OCI-LY7 (cell line): ENCODE measurements at regions of chr20 and their contacts with region 1.

Region 1: DNA sequence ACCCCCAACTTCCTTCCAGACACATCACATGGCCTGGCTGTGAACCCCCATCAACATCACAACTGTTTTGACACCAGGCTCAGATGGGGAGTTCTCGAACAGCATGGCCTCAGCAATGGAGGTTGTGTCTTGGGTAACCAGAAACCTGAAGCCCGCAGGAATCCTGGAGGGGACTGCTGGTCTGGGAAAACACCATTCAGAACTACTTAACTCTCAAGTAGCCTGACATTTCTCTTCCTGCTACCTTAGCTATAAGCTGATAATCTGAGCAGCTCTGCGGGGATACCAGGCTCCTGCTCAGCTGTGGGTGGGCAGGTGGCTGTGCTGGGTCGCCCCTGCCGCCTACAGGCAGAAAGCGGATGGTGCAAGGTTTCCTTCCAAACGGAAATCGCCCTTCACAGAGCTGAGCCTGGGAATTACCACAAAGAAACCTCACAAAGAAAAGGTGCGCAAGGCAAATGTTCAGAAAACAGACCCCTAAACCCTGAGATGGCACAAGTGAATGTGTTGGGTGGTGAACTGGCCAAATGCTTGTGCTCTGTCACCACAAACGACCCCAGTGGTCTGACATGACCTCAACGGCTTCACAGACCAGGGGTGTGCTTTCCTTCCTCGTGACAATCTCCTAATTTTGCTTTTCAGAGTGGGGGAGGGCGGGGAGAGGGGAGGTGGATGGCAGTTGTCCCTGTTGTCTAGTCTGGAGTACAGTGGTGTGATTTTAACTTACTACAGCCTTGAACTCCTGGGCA is 29.5 kb downstream of the SNX5 start:
- DNase-seq: peak; percentile 75
- H3K4me3 ChIP-seq: no peak overlapping the region
- H3K27ac ChIP-seq: peak overlapping the region; percentile 16
- H3K4me1 ChIP-seq: peaks cover 51% of the 10 kb centered on the region
- CTCF ChIP-seq: peak; percentile 86

Region 2: GRCh38 chr20:17504898-17505635 is 434.0 kb before region 1 on chr20:
- CTCF ChIA-PET with region 1: no interaction called
- POLR2A ChIA-PET with region 1: no interaction called
- intact Hi-C with region 1: loop called (anchors 1 kb)
- DNase-seq: peak; percentile 79
- H3K4me3 ChIP-seq: peak overlapping the region; percentile 60
- H3K27ac ChIP-seq: no peak overlapping the region
- H3K4me1 ChIP-seq: peaks cover 13% of the 10 kb centered on the region
- CTCF ChIP-seq: peak; percentile 90

Region 3: DNA sequence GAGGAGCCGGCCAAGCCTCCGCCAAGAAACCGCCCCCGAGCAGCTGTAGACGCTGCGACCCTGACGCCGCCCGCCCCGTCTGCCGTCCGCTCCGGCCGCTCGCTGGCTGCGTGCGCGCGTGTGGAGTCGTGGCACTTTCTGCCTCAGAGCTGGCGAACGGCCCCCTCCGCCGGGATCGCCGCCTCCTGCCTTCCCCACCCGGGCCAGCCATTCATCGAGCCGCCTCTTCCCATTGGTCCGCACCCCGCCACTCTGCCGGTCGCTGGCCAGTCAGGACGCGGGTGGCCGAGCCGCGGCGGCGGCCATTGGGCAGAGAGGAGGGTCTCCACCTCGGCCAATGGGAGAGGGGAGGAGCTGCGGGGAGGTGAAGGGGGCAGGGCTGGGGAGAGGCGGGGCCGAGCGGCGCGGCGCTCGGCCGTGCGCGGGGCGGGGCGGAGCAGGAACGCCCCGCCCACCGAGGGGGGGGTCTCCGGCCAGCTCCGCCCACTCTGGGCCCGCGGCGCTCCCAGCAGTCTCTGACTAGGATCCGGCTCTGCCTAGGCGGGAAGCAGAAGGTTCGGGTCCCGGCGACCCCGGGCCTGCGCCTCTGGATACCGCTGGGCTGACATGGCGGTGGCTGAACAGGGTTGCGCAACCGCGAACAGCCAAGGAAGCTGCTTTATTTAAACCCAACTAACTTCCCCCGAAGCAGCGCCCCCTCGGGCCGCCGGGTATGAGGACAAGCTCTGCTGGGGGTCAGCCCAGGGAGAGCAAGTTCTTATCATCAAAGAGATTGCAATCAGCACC is 256.7 kb before region 1 on chr20 and contains the start of gene RRBP1:
- CTCF ChIA-PET with region 1: interaction called, 3 read pairs
- POLR2A ChIA-PET with region 1: no interaction called
- intact Hi-C with region 1: loop called (anchors 1 kb)
- DNase-seq: peak; percentile 97
- H3K4me3 ChIP-seq: peak within 1 kb of the TSS; percentile 74
- H3K27ac ChIP-seq: peak within 1 kb of the TSS; percentile 50
- H3K4me1 ChIP-seq: peaks cover 15% of the 10 kb centered on the region
- CTCF ChIP-seq: peak; percentile 97
- total RNA-seq, gene RRBP1: 13.6 and 16.8 TPM in 2 replicates

Region 4: DNA sequence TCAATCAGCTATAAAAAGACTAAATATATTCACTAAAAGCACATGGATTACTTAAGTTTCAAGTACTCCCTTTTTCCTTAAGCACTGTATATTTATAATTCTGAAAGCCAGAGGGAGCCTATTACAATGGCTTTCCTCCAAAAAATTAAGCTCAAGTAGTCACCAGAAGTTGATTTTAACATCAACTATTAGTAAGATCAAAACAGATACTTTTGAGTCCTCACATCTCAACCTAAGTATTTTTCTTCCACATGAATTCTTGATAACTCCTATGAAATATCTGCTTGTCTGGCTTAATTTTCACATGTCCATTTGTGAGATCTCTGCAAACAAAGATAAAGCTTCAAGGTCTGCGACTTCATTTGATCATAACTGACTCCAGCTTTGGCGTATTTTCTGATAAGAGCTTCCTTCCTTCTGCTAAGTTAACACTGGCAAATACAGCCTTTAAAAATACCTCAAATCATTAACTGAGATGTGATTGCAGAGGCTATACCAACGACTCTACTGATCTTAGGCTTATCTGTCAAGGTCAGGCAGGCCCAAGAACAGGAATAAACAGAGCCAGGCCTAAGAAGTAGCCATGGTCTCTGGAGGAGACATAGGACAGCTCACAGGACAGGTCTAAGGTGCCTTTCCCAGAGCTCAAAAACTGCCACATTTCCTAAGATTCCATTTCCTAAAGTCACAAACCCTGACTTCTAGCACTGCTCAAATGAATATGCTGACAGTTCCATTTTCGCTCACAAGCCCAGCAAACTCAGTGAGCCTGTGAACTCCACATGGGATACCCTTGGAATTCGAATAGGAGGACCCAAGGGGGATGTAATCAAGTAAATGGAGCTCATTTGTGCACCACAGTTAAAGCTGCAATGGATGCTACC is 19.6 kb after region 1 on chr20:
- CTCF ChIA-PET with region 1: interaction called, 3 read pairs
- POLR2A ChIA-PET with region 1: interaction called, 12 read pairs
- intact Hi-C with region 1: no loop called
- DNase-seq: no peak
- H3K4me3 ChIP-seq: peak overlapping the region; percentile 97
- H3K27ac ChIP-seq: peak overlapping the region; percentile 55
- H3K4me1 ChIP-seq: peaks cover 100% of the 10 kb centered on the region
- CTCF ChIP-seq: no peak

Region 5: GRCh38 chr20:17995967-17996819 is 57.1 kb after region 1 on chr20:
- CTCF ChIA-PET with region 1: no interaction called
- POLR2A ChIA-PET with region 1: interaction called, 3 read pairs
- intact Hi-C with region 1: loop called (anchors 1 kb)
- DNase-seq: peak; percentile 76
- H3K4me3 ChIP-seq: no peak overlapping the region
- H3K27ac ChIP-seq: no peak overlapping the region
- H3K4me1 ChIP-seq: peaks cover 14% of the 10 kb centered on the region
- CTCF ChIP-seq: peak; percentile 99

Region 6: GRCh38 chr20:18007534-18008292 is 68.7 kb after region 1 on chr20:
- CTCF ChIA-PET with region 1: no interaction called
- POLR2A ChIA-PET with region 1: no interaction called
- intact Hi-C with region 1: no loop called
- DNase-seq: no peak
- H3K4me3 ChIP-seq: no peak overlapping the region
- H3K27ac ChIP-seq: no peak overlapping the region
- H3K4me1 ChIP-seq: peaks cover 19% of the 10 kb centered on the region
- CTCF ChIP-seq: no peak